Posterior vena cava (tissue), 2 donors: ENCODE measurements at regions of chr3 and their contacts with region 1.

Region 1: GRCh38 chr3:50321336-50322114 is 1.0 kb downstream of the HYAL2 start:
- DNase-seq: peak; percentile 96

Region 2: DNA sequence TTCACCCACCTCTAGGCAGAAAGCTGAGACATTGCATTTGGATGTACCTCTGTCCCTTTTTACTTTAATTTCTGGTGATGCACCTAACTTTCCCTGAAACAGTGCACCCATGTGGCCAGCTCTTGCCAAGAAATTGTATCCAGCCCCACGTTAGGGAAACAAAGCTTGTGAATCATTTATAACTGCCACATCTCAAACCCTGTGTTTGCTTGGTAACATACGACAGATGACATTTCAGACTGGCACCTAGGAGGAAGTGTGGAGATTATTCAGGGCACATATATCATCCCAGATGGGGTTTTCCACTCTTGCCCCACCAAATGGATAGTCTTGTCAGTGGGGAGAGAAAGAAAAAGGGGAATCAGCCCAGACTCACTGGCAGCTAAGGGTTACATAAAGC is 31.3 kb after region 1 on chr3:
- intact Hi-C with region 1: loop called in 1 of 2 experiments (anchors 1 kb)
- DNase-seq: no peak

Region 3: GRCh38 chr3:50365080-50365841 is 43.7 kb after region 1 on chr3:
- intact Hi-C with region 1: no loop called
- DNase-seq: peak; percentile 95